Heart left ventricle (tissue), 16 donors: ENCODE measurements at regions of chr9 and their contacts with region 1.

Region 1: GRCh38 chr9:100590481-100590880 is 12.6 kb downstream of the CAVIN4 start:
- DNase-seq: no peak
- ATAC-seq: no peak
- H3K4me3 ChIP-seq: no peak overlapping the region
- H3K27ac ChIP-seq: no peak overlapping the region
- H3K4me1 ChIP-seq: peaks cover 0 to 13% (median 3%) of the 10 kb centered on the region in 12 donors
- H3K27me3 ChIP-seq: no peaks in the 10 kb centered on the region
- CTCF ChIP-seq: no peak
- POLR2A ChIP-seq: no peak

Region 2: DNA sequence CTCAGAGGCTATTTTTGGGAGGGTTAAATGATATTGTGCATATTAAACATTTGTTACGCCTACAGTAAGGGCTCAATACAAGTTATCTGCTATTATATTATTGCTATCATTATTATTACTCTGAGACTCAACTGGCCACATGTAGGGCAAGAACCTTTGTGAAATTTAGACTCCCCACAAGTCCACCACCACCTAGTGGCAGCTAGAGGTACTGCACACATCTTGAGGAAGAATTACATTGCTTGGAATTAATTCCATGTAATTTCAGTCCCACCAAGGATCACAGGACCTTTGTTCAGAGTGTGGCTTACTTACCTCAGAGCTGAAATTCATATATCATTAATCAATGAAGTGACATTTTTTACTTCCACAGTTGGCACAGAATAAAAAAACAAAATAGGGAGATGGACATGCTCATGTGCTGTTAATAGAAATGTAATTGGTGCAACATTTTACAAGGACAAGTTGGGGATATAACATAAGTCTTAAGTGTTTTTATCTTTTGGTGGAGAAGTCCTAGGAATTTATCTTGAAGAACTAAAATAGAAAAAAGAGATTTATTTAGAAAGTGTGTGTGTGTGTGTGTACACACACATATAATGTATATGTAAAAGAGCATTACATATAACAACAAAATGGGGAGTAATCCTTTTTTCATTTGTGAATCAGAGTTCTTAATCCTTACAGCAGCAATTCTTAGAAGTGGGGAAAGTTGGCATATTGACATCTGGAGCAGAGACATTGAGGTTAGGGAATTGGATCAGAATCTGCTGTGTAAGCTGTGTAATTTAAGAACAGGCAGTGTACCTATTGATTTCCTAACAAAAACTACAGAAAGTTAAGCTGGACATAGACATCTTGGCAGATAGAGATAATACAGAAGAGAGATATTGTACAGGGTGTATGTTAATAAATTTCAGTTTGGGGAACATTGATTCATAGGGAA is 152.3 kb before region 1 on chr9:
- intact Hi-C with region 1: loop called in 5 of 10 experiments (anchors 5 to 10 kb)
- DNase-seq: peak in 4 of 5 donors; percentile 50 to 72 (median 58)
- ATAC-seq: peak in 3 of 4 donors; percentile 41 to 59 (median 56)
- H3K4me3 ChIP-seq: no peak overlapping the region
- H3K27ac ChIP-seq: no peak overlapping the region
- H3K4me1 ChIP-seq: no peaks in the 10 kb centered on the region
- H3K27me3 ChIP-seq: no peaks in the 10 kb centered on the region
- CTCF ChIP-seq: peak; percentile 89 to 100 (median 94)
- POLR2A ChIP-seq: no peak